IMR-90 (cell line): ENCODE measurements at regions of chr16 and their contacts with region 1.

Region 1: GRCh38 chr16:24729362-24729984 is at the start of gene TNRC6A:
- DNase-seq: peak; percentile 86
- ATAC-seq: peak; percentile 90
- H3K4me3 ChIP-seq: peak within 1 kb of the TSS; percentile 96
- H3K27ac ChIP-seq: peak within 1 kb of the TSS; percentile 97
- H3K4me1 ChIP-seq: peaks cover 10% of the 10 kb centered on the region
- H3K27me3 ChIP-seq: no peaks in the 10 kb centered on the region
- CTCF ChIP-seq: no peak
- POLR2A ChIP-seq: peak; percentile 74
- RAD21 ChIP-seq: no peak; the same call in 1 of the 2 replicates
- total RNA-seq, gene TNRC6A: 32.4 and 36.9 TPM in 2 replicates

Region 2: GRCh38 chr16:24635900-24636610 is 93.4 kb before region 1 on chr16:
- CTCF ChIA-PET with region 1: no interaction called
- POLR2A ChIA-PET with region 1: no interaction called
- dilution Hi-C with region 1: no loop called
- in situ Hi-C with region 1: no loop called
- intact Hi-C with region 1: loop called (anchors 5 kb)
- DNase-seq: peak; percentile 91
- ATAC-seq: peak; percentile 83
- H3K4me3 ChIP-seq: no peak overlapping the region
- H3K27ac ChIP-seq: peak overlapping the region; percentile 84
- H3K4me1 ChIP-seq: peaks cover 3% of the 10 kb centered on the region
- H3K27me3 ChIP-seq: no peaks in the 10 kb centered on the region
- CTCF ChIP-seq: no peak
- POLR2A ChIP-seq: no peak
- RAD21 ChIP-seq: no peak

Region 3: GRCh38 chr16:24685539-24686432 is 43.7 kb before region 1 on chr16:
- CTCF ChIA-PET with region 1: no interaction called
- POLR2A ChIA-PET with region 1: no interaction called
- dilution Hi-C with region 1: no loop called
- in situ Hi-C with region 1: no loop called
- intact Hi-C with region 1: no loop called
- DNase-seq: peak; percentile 82
- ATAC-seq: peak; percentile 64
- H3K4me3 ChIP-seq: no peak overlapping the region
- H3K27ac ChIP-seq: peak overlapping the region; percentile 76
- H3K4me1 ChIP-seq: peaks cover 13% of the 10 kb centered on the region
- H3K27me3 ChIP-seq: no peaks in the 10 kb centered on the region
- CTCF ChIP-seq: no peak
- POLR2A ChIP-seq: no peak
- RAD21 ChIP-seq: no peak

Region 4: DNA sequence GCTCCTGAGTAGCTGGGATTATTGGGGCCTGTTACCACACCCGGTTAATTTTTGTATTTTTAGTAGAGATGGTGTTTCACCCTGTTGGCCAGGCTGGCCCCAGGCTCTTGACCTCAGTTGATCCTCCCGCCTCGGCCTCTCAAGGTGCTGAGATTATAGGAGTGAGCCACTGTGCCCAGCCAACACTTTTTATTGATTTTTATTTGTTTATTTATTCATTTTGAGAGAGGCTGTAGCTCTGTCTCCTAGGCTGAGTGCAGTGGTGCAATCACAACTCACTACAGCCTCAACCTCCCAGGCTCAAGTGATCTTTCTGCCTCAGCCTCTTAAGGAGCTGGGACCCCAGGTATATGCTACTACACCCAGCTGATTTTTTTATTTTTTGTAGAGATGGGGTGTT is 54.6 kb after region 1 on chr16:
- CTCF ChIA-PET with region 1: no interaction called
- POLR2A ChIA-PET with region 1: interaction called, 16 read pairs
- dilution Hi-C with region 1: no loop called
- in situ Hi-C with region 1: no loop called
- intact Hi-C with region 1: no loop called
- DNase-seq: no peak
- ATAC-seq: no peak
- H3K4me3 ChIP-seq: no peak overlapping the region
- H3K27ac ChIP-seq: no peak overlapping the region
- H3K4me1 ChIP-seq: no peaks in the 10 kb centered on the region
- H3K27me3 ChIP-seq: no peaks in the 10 kb centered on the region
- CTCF ChIP-seq: no peak
- POLR2A ChIP-seq: no peak
- RAD21 ChIP-seq: no peak

Region 5: DNA sequence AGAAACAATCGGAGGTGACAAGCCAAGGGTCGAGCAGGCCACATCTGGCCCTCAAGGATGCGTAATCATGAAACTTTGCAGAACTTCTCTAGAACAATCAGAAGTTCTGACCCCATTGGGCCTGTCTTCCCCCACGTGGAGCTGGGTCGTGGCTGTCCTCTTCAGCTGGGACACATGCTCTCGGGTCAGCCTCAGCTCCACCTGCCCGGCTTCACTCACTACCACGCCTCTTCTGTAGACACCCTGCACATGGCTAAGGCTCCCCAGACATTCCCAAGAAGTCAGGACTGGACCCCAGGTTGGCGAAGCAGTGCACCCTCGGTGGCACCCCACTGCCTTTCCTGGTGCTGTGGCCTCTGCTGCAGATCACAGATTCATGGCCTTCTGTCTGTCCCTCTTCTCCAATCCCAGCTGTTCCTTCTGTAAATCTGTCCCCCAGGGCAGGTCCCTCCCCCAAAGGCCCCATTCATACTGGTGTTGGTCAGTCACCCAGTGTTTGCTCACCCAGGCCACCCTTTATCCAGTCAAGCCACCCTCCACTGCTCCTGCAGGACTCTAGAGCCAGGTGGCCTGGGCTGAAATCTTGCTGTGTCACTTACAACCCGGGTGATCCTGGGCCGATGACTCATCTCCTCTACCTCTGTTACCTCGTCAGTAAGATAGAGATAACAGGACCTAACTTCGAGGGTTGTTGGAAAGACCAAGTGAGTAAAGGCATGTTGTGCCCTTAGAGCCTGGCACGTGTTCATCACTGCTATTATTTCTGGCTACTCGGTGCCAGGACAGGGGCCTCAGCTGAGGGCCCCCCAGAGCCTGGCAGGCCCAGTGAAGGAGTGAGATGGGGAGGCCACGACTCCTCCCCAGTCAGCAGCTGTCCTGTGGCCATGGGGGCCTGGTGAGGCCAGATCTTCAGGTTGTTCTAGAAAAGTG is 114.9 kb after region 1 on chr16:
- CTCF ChIA-PET with region 1: no interaction called
- POLR2A ChIA-PET with region 1: no interaction called
- dilution Hi-C with region 1: no loop called
- in situ Hi-C with region 1: no loop called
- intact Hi-C with region 1: no loop called
- DNase-seq: peak; percentile 28
- ATAC-seq: no peak
- H3K4me3 ChIP-seq: no peak overlapping the region
- H3K27ac ChIP-seq: no peak overlapping the region
- H3K4me1 ChIP-seq: peaks cover 2% of the 10 kb centered on the region; the same call in 1 of the 2 replicates
- H3K27me3 ChIP-seq: no peaks in the 10 kb centered on the region
- CTCF ChIP-seq: no peak
- POLR2A ChIP-seq: no peak
- RAD21 ChIP-seq: no peak